ENCODE measurements at regions of chr6 and their contacts with region 1.

Region 1: GRCh38 chr6:126131246-126131645 is 144.9 kb downstream of the TRMT11 start:
- DNase-seq: no peak
- ATAC-seq: no peak
- H3K4me3 Mint-ChIP-seq: no peak overlapping the region
- H3K27ac Mint-ChIP-seq: no peak overlapping the region
- H3K4me1 Mint-ChIP-seq: no peaks in the 10 kb centered on the region
- H3K27me3 Mint-ChIP-seq: no peaks in the 10 kb centered on the region

Region 2: DNA sequence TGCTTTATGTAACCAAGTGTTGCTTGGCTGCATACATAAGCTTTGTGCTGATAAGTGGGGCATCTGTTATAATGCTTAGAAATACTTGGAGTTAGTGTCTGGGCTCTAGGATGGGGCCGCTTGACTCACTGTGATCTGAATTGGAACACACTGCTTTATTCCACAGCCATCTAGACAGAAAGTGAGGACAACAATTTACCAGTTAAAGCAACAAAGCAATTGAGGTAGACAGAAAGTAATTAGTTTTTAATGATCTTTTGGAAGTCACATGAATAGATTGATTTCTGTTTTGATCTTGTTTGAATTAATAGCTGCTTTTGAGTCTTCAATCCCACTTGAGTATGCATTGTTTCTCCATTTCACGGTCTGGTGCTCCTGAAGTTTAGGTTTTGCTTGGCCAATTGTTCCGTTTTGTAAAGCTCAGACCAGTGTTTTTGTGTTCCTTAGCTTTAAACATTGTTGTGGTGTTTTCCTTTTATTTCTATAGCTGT is 12.6 kb after region 1 on chr6:
- CTCF ChIA-PET with region 1: interaction called, 3 read pairs
- POLR2A ChIA-PET with region 1: no interaction called
- intact Hi-C with region 1: loop called in 1 of 2 experiments (anchors 1 kb)
- DNase-seq: no peak
- ATAC-seq: no peak
- H3K4me3 Mint-ChIP-seq: no peak overlapping the region
- H3K27ac Mint-ChIP-seq: no peak overlapping the region
- H3K4me1 Mint-ChIP-seq: no peaks in the 10 kb centered on the region
- H3K27me3 Mint-ChIP-seq: no peaks in the 10 kb centered on the region